ENCODE measurements at regions of chr6 and their contacts with region 1.

Region 1: GRCh38 chr6:43013843-43014433 is at the starts of genes KLHDC3 and MEA1:
- DNase-seq: peak; percentile 98 to 100 (median 100)
- H3K4me3 ChIP-seq: peak within 1 kb of the TSS; percentile 75 to 84
- H3K4me3 Mint-ChIP-seq: peak within 1 kb of the TSS; percentile 91 to 97 (median 94)
- H3K27ac ChIP-seq: peak within 1 kb of the TSS; percentile 71
- H3K27ac Mint-ChIP-seq: peak within 1 kb of the TSS; percentile 75 to 98 (median 94)
- H3K4me1 ChIP-seq: peaks cover 54% of the 10 kb centered on the region
- H3K4me1 Mint-ChIP-seq: peaks cover 39 to 71% (median 56%) of the 10 kb centered on the region in 4 donors
- H3K27me3 ChIP-seq: no peaks in the 10 kb centered on the region
- H3K27me3 Mint-ChIP-seq: no peaks in the 10 kb centered on the region
- total RNA-seq, gene KLHDC3: 66.6 to 67.9 TPM
- total RNA-seq, gene MEA1: 36.2 to 36.3 TPM

Region 2: GRCh38 chr6:42563697-42564505 is 450.0 kb before region 1 on chr6 and contains the start of gene UBR2:
- CTCF ChIA-PET with region 1: no interaction called
- POLR2A ChIA-PET with region 1: no interaction called
- intact Hi-C with region 1: loop called (anchors 1 kb)
- DNase-seq: peak; percentile 92 to 98 (median 95)
- H3K4me3 ChIP-seq: peak within 1 kb of the TSS; percentile 98 to 100
- H3K4me3 Mint-ChIP-seq: peak within 1 kb of the TSS; percentile 92 to 100 (median 98)
- H3K27ac ChIP-seq: peak within 1 kb of the TSS; percentile 94
- H3K27ac Mint-ChIP-seq: peak within 1 kb of the TSS; percentile 90 to 98 (median 96)
- H3K4me1 ChIP-seq: peaks cover 33% of the 10 kb centered on the region
- H3K4me1 Mint-ChIP-seq: peaks cover 21 to 43% (median 28%) of the 10 kb centered on the region in 4 donors
- H3K27me3 ChIP-seq: no peaks in the 10 kb centered on the region
- H3K27me3 Mint-ChIP-seq: peaks cover 0 to 1% of the 10 kb centered on the region in 2 donors
- total RNA-seq, gene UBR2: 55.0 to 55.7 TPM

Region 3: GRCh38 chr6:43053545-43054205 is 39.7 kb after region 1 on chr6 and contains the start of gene CUL7:
- CTCF ChIA-PET with region 1: interaction called, 7 read pairs
- POLR2A ChIA-PET with region 1: interaction called, 51 read pairs
- intact Hi-C with region 1: loop called (anchors 1 kb)
- DNase-seq: peak; percentile 86 to 92 (median 88)
- H3K4me3 ChIP-seq: peak within 1 kb of the TSS; percentile 81 to 88
- H3K4me3 Mint-ChIP-seq: peak within 1 kb of the TSS; percentile 92 to 97 (median 94)
- H3K27ac ChIP-seq: peak within 1 kb of the TSS; percentile 85
- H3K27ac Mint-ChIP-seq: peak within 1 kb of the TSS; percentile 94 to 98 (median 97)
- H3K4me1 ChIP-seq: peaks cover 41% of the 10 kb centered on the region
- H3K4me1 Mint-ChIP-seq: peaks cover 22 to 51% (median 44%) of the 10 kb centered on the region in 4 donors
- H3K27me3 ChIP-seq: no peaks in the 10 kb centered on the region
- H3K27me3 Mint-ChIP-seq: no peaks in the 10 kb centered on the region
- total RNA-seq, gene CUL7: 13.7 to 13.9 TPM

Region 4: GRCh38 chr6:43059168-43060033 is 45.5 kb after region 1 on chr6 and contains the starts of genes KLC4 and MRPL2:
- CTCF ChIA-PET with region 1: interaction called, 7 read pairs
- POLR2A ChIA-PET with region 1: interaction called, 51 read pairs
- intact Hi-C with region 1: loop called (anchors 1 kb)
- DNase-seq: peak; percentile 95 to 99 (median 96)
- H3K4me3 ChIP-seq: peak within 1 kb of the TSS; percentile 84 to 87
- H3K4me3 Mint-ChIP-seq: peak within 1 kb of the TSS; percentile 94 to 99 (median 97)
- H3K27ac ChIP-seq: peak within 1 kb of the TSS; percentile 91
- H3K27ac Mint-ChIP-seq: peak within 1 kb of the TSS; percentile 97 to 100 (median 99)
- H3K4me1 ChIP-seq: peaks cover 24% of the 10 kb centered on the region
- H3K4me1 Mint-ChIP-seq: peaks cover 27 to 52% (median 35%) of the 10 kb centered on the region in 4 donors
- H3K27me3 ChIP-seq: no peaks in the 10 kb centered on the region
- H3K27me3 Mint-ChIP-seq: no peaks in the 10 kb centered on the region
- total RNA-seq, gene KLC4: 51.6 to 57.0 TPM
- total RNA-seq, gene MRPL2: 55.3 to 56.5 TPM

Region 5: DNA sequence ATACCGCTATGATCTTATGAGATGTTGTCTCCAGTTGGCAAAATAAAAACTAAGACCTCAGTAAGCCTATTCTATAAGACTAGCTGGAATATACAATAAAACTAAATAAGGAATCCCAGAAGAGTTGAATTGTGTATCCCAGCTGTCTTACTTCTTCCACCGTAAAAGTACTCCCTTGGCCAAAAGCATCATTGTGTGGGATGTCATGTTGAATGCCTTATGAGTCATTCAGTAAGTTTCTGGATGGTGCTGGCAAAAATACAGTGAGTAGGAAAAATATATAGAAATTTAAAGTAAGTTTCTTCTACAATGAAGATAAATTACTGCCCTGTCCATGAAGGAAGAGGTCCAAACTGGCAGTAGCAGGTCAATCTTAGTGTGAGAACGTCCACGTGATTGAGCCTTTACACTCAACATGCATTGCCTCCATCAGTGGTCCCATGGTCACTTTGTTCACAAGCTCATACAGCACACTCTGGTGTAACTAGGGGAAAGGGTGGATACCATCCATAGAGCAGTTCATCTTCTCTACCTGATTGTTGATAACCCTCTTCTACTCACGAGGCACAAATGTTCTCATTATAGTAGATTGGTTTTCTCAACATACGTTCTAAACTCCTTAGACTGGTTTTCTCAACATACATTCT is 369.2 kb after region 1 on chr6:
- CTCF ChIA-PET with region 1: no interaction called
- POLR2A ChIA-PET with region 1: no interaction called
- intact Hi-C with region 1: no loop called
- DNase-seq: no peak
- H3K4me3 ChIP-seq: peak overlapping the region in 1 of 2 donors; percentile 27
- H3K4me3 Mint-ChIP-seq: peak overlapping the region; percentile 5 to 84 (median 71)
- H3K27ac ChIP-seq: peak overlapping the region; percentile 75
- H3K27ac Mint-ChIP-seq: peak overlapping the region; percentile 79 to 99 (median 95)
- H3K4me1 ChIP-seq: peaks cover 51% of the 10 kb centered on the region
- H3K4me1 Mint-ChIP-seq: peaks cover 49 to 75% (median 60%) of the 10 kb centered on the region in 4 donors
- H3K27me3 ChIP-seq: no peaks in the 10 kb centered on the region
- H3K27me3 Mint-ChIP-seq: no peaks in the 10 kb centered on the region